ENCODE measurements at regions of chr2 and their contacts with region 1.

Region 1: DNA sequence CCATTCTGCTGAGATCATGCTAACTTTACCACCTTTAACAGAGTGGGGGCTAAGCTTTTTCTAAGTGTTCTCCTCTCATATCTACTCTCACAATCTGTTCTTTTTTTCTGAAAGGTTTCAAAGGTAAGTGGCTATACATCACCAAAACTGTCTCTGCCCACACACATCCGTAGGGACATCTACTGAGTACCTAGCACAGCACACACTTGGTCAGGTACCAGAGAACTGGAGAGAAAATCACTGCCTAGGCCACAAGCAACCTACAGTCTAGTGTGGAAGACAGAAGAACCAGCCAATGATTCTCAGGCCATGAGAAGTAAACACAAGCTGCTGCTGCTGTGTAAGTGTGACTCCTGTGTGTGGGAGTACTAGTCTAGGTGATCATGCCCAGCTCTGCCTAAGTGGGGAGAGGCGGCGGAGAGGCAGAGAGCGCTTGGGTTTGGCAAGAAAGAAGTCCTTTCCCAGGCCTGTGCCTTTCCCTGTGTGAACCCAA is 176.1 kb upstream of the ZFP36L2 start:
- DNase-seq: peak; percentile 39
- CTCF ChIP-seq: no peak

Region 2: DNA sequence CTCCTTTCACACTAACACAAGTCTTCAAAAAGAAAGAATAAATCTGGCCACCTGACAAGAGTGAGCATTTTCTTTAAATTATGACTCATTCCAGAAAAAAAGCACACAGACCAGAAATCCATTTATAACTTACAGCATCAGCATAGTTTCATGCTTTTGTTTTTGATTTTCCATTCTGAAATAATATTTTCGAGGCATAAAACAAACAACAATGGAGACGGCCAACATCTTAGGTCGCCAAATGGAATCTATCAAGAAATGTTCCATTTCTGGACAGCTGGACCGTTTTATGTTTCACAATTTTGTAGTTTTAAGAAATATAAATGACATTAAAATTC is 10.7 kb before region 1 on chr2:
- CTCF ChIA-PET with region 1: interaction called, 32 read pairs
- POLR2A ChIA-PET with region 1: no interaction called
- DNase-seq: peak; percentile 10
- CTCF ChIP-seq: no peak

Region 3: GRCh38 chr2:43426305-43427031 is 24.0 kb after region 1 on chr2:
- CTCF ChIA-PET with region 1: interaction called, 14 read pairs
- POLR2A ChIA-PET with region 1: interaction called, 8 read pairs
- DNase-seq: peak; percentile 80
- CTCF ChIP-seq: no peak

Measured in GM10248 (cell line).